K562 (cell line): ENCODE measurements at regions of chr7 and their contacts with region 1.

Region 1: GRCh38 chr7:91089382-91089963 is 174.8 kb upstream of the FZD1 start:
- DNase-seq: peak; percentile 32 to 54 (median 36)
- ATAC-seq: peak; percentile 93
- H3K4me3 ChIP-seq: no peak overlapping the region
- H3K27ac ChIP-seq: no peak overlapping the region
- H3K4me1 ChIP-seq: no peaks in the 10 kb centered on the region
- H3K27me3 ChIP-seq: peaks cover 2 to 5% of the 10 kb centered on the region in 2 experiments; a peak in 1 of 5 replicates
- CTCF ChIP-seq: peak; percentile 51 to 81 (median 74); a peak in 5 of 6 replicates
- EP300 ChIP-seq: no peak
- POLR2A ChIP-seq: no peak
- RAD21 ChIP-seq: peak; percentile 57 to 62

Region 2: DNA sequence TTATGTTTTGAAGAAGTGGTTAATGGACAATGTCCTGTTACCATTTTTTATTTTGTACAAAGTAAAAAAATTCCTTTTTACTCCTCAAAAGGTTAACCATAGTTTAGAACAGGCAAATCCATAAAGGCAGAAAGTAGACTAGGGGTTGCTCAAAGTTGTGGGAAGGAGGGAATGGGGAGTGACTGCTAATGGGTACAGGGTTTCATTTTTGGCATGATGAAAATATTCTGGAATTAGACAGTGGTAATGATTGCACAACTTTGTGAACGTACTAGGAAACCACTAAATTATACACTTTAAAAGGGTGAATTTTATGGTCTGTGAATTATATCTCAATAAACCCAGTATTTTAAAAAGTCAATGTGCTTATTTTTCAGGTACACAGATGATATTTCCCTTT is 528.7 kb before region 1 on chr7:
- CTCF ChIA-PET with region 1: no interaction called
- POLR2A ChIA-PET with region 1: no interaction called
- in situ Hi-C with region 1: no loop called
- intact Hi-C with region 1: no loop called
- DNase-seq: no peak
- ATAC-seq: no peak
- H3K4me3 ChIP-seq: no peak overlapping the region
- H3K27ac ChIP-seq: no peak overlapping the region
- H3K4me1 ChIP-seq: no peaks in the 10 kb centered on the region
- H3K27me3 ChIP-seq: no peaks in the 10 kb centered on the region
- CTCF ChIP-seq: no peak
- EP300 ChIP-seq: no peak
- POLR2A ChIP-seq: no peak
- RAD21 ChIP-seq: no peak

Region 3: GRCh38 chr7:91288208-91288824 is 198.8 kb after region 1 on chr7:
- CTCF ChIA-PET with region 1: no interaction called
- POLR2A ChIA-PET with region 1: no interaction called
- in situ Hi-C with region 1: no loop called
- intact Hi-C with region 1: loop called (anchors 5 kb)
- DNase-seq: peak; percentile 47 to 81 (median 54)
- ATAC-seq: peak; percentile 93
- H3K4me3 ChIP-seq: no peak overlapping the region
- H3K27ac ChIP-seq: no peak overlapping the region
- H3K4me1 ChIP-seq: no peaks in the 10 kb centered on the region
- H3K27me3 ChIP-seq: no peaks in the 10 kb centered on the region; a peak in 1 of 5 replicates
- CTCF ChIP-seq: peak; percentile 74 to 85 (median 82)
- EP300 ChIP-seq: no peak
- POLR2A ChIP-seq: no peak
- RAD21 ChIP-seq: peak; percentile 66 to 83

Region 4: GRCh38 chr7:91436655-91437054 is 347.2 kb after region 1 on chr7:
- CTCF ChIA-PET with region 1: no interaction called
- POLR2A ChIA-PET with region 1: no interaction called
- in situ Hi-C with region 1: no loop called
- intact Hi-C with region 1: loop called (anchors 10 kb)
- DNase-seq: no peak
- ATAC-seq: no peak
- H3K4me3 ChIP-seq: no peak overlapping the region
- H3K27ac ChIP-seq: no peak overlapping the region
- H3K4me1 ChIP-seq: no peaks in the 10 kb centered on the region
- H3K27me3 ChIP-seq: no peaks in the 10 kb centered on the region
- CTCF ChIP-seq: no peak
- EP300 ChIP-seq: no peak
- POLR2A ChIP-seq: no peak
- RAD21 ChIP-seq: no peak

Region 5: DNA sequence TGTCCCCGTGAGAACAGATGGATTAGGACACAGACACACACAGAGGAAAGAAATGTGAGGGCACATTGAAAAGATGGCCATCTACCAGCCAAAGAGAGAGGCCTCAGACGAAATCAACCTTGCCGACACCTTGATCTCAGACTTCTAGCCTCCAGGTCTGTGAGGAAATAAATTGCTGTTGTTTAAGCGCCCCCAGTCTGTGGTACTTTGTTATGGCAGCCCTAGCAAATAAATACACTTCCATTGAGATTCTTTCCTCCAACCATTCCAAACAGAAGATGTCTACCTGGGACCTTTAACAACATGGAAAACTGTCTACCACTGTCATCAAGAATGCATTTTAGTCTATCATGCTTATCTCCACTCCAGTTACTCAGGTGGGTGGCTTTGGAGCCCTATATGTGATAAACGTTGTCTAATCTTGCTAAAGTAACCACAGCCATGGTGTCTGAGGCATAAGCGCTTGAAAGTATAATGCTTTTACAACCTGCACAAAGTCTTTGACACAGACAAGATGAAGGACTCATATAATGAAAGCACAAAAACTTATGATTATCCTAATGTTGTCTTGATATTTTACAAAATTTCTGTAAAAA is 546.8 kb after region 1 on chr7:
- CTCF ChIA-PET with region 1: interaction called, 3 read pairs
- POLR2A ChIA-PET with region 1: no interaction called
- in situ Hi-C with region 1: loop called (anchors 5 kb)
- intact Hi-C with region 1: loop called (anchors 2 kb)
- DNase-seq: peak in 2 of 4 experiments; percentile 15 to 71
- ATAC-seq: peak; percentile 90
- H3K4me3 ChIP-seq: no peak overlapping the region
- H3K27ac ChIP-seq: no peak overlapping the region
- H3K4me1 ChIP-seq: no peaks in the 10 kb centered on the region
- H3K27me3 ChIP-seq: peaks cover 0 to 4% of the 10 kb centered on the region in 2 experiments; a peak in 2 of 5 replicates
- CTCF ChIP-seq: peak; percentile 71 to 86 (median 78)
- EP300 ChIP-seq: no peak
- POLR2A ChIP-seq: no peak
- RAD21 ChIP-seq: peak; percentile 91 to 93

Region 6: GRCh38 chr7:91784463-91784862 is 695.0 kb after region 1 on chr7:
- CTCF ChIA-PET with region 1: interaction called, 6 read pairs
- POLR2A ChIA-PET with region 1: no interaction called
- in situ Hi-C with region 1: no loop called
- intact Hi-C with region 1: loop called (anchors 1 kb)
- DNase-seq: peak; percentile 15 to 23 (median 20)
- ATAC-seq: 0 out of 3 replicates have a peak, but pooled peaks have one; percentile 49
- H3K4me3 ChIP-seq: no peak overlapping the region
- H3K27ac ChIP-seq: no peak overlapping the region
- H3K4me1 ChIP-seq: no peaks in the 10 kb centered on the region
- H3K27me3 ChIP-seq: no peaks in the 10 kb centered on the region
- CTCF ChIP-seq: peak in 2 of 3 experiments; percentile 17 to 65; a peak in 3 of 6 replicates
- EP300 ChIP-seq: no peak
- POLR2A ChIP-seq: no peak
- RAD21 ChIP-seq: peak; percentile 78 to 83

Region 7: GRCh38 chr7:91852263-91852741 is 762.8 kb after region 1 on chr7:
- CTCF ChIA-PET with region 1: no interaction called
- POLR2A ChIA-PET with region 1: no interaction called
- in situ Hi-C with region 1: no loop called
- intact Hi-C with region 1: loop called (anchors 10 kb)
- DNase-seq: peak in 2 of 4 experiments; percentile 51 to 75
- ATAC-seq: peak; percentile 96
- H3K4me3 ChIP-seq: no peak overlapping the region
- H3K27ac ChIP-seq: no peak overlapping the region
- H3K4me1 ChIP-seq: no peaks in the 10 kb centered on the region
- H3K27me3 ChIP-seq: no peaks in the 10 kb centered on the region
- CTCF ChIP-seq: peak; percentile 61 to 77 (median 69)
- EP300 ChIP-seq: 0 out of 2 replicates have a peak, but pooled peaks have one; percentile 31
- POLR2A ChIP-seq: no peak
- RAD21 ChIP-seq: peak; percentile 10 to 61; a peak in 2 of 4 replicates